ENCODE measurements at regions of chr2 and their contacts with region 1.

Region 1: DNA sequence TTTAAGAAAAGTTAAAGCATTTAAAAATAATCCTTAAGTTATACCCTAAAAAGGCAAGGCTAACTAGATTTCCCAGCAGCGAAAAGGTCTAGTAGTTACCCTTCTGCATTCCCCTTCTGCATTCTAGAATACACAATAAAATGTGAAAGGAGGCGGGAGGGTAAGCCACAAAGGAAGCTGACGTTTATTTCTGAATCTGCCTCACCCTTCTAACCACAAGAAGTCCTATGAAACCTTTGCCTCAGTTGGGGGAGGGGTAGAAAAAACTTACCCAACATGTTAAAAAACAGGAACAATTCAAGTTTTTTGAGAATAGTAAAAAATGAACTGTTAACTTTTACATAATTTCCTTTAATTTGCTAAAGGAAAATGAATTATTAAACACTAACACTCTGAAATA is 11.3 kb downstream of the STK17B start:
- DNase-seq: peak in 29 of 35 experiments; percentile 36 to 91 (median 65)
- ATAC-seq: peak; percentile 50 to 72 (median 68)
- H3K4me3 ChIP-seq: peak overlapping the region in 1 of 2 donors; percentile 22
- H3K4me3 Mint-ChIP-seq: peak overlapping the region; percentile 54 to 99 (median 67)
- H3K27ac ChIP-seq: peak overlapping the region; percentile 93
- H3K27ac Mint-ChIP-seq: peak overlapping the region; percentile 82
- H3K4me1 ChIP-seq: peaks cover 36 to 67% of the 10 kb centered on the region in 2 experiments
- H3K4me1 Mint-ChIP-seq: peaks cover 72 to 85% (median 82%) of the 10 kb centered on the region in 3 donors
- H3K27me3 ChIP-seq: no peaks in the 10 kb centered on the region
- H3K27me3 Mint-ChIP-seq: no peaks in the 10 kb centered on the region

Region 2: GRCh38 chr2:196131384-196131937 is 28.6 kb before region 1 on chr2:
- CTCF ChIA-PET with region 1: no interaction called
- POLR2A ChIA-PET with region 1: interaction called in 1 of 2 experiments, 10 read pairs
- DNase-seq: peak in 30 of 35 experiments; percentile 12 to 79 (median 44)
- ATAC-seq: peak; percentile 23 to 40 (median 34)
- H3K4me3 ChIP-seq: no peak overlapping the region
- H3K4me3 Mint-ChIP-seq: peak overlapping the region in 1 of 3 donors; percentile 43
- H3K27ac ChIP-seq: peak overlapping the region; percentile 33
- H3K27ac Mint-ChIP-seq: peak overlapping the region; percentile 62 to 83
- H3K4me1 ChIP-seq: peaks cover 0 to 10% of the 10 kb centered on the region in 2 experiments
- H3K4me1 Mint-ChIP-seq: peaks cover 14 to 21% (median 18%) of the 10 kb centered on the region in 3 donors
- H3K27me3 ChIP-seq: no peaks in the 10 kb centered on the region
- H3K27me3 Mint-ChIP-seq: no peaks in the 10 kb centered on the region

Region 3: DNA sequence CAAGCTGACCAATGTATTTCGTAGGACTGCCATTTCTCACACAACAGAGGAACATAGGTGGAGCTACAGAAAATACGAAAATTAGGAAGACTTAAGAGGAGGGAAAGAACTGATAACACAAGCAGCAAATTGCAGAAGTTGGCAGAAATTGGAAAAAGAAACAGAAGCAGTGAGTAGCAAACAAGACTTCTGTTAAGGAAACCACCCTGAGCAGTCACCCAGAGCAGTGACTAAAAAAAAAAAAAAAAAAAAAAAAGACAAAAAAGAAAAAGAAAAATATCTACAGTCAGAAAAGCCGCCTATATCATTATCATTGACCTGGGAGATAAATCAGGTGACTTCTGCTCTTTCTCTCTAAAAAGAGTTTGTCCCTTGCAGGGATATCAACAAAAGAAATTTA is 10.2 kb before region 1 on chr2:
- CTCF ChIA-PET with region 1: interaction called, 4 read pairs
- POLR2A ChIA-PET with region 1: interaction called, 10 to 29 read pairs
- DNase-seq: peak in 1 of 35 experiments; percentile 55
- ATAC-seq: peak in 1 of 4 experiments; percentile 16
- H3K4me3 ChIP-seq: no peak overlapping the region
- H3K4me3 Mint-ChIP-seq: peak overlapping the region; percentile 58 to 99 (median 67)
- H3K27ac ChIP-seq: peak overlapping the region; percentile 43
- H3K27ac Mint-ChIP-seq: peak overlapping the region; percentile 88 to 96
- H3K4me1 ChIP-seq: peaks cover 44 to 67% of the 10 kb centered on the region in 2 experiments
- H3K4me1 Mint-ChIP-seq: peaks cover 90 to 98% (median 94%) of the 10 kb centered on the region in 3 donors
- H3K27me3 ChIP-seq: no peaks in the 10 kb centered on the region
- H3K27me3 Mint-ChIP-seq: no peaks in the 10 kb centered on the region

Region 4: DNA sequence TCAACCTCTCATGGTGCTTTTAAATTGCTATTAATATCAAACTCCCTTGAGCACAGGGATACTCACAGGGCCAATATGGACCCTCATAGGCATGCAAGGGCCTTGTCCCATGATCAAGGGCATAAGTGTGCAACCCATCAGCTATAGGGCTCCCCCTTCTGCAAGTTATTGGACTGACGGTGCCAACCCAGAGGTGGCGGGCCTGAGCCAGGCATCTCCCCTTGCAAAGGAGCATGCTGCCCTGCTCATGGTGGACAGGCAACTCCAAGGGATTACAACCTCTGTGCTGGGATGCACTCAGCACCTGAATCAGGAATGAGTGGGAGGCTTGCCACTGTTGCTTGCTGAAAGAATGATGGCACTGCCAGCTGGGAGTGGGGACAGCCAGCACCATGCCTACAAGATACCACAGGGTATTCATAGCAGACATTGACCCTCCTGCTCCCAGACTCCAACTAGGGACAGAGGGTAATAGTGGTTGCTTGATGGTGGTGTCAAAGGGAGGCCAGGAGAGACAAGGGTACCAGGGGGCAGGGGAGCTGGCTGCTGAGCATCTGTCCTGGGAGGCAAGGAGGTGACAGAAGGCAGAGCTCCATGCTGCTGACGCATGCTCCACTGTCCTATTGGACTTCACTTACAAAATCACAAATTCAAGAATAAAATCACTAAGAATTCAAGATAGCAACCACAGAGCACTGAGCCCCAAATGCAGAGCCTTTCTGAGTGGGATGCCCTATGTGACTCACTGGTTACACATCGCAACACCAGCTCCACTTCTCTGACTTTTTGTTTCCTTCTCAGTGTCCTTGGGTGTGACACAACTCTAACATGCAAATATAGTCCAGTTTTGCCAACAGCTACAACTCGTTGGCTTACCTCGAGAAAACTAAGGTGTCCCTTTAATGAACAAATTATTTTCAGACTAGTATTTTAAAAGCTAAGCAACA is 322.3 kb after region 1 on chr2:
- CTCF ChIA-PET with region 1: no interaction called
- POLR2A ChIA-PET with region 1: interaction called in 1 of 2 experiments, 14 read pairs
- DNase-seq: no peak
- ATAC-seq: no peak
- H3K4me3 ChIP-seq: no peak overlapping the region
- H3K4me3 Mint-ChIP-seq: no peak overlapping the region
- H3K27ac ChIP-seq: no peak overlapping the region
- H3K27ac Mint-ChIP-seq: no peak overlapping the region
- H3K4me1 ChIP-seq: no peaks in the 10 kb centered on the region
- H3K4me1 Mint-ChIP-seq: no peaks in the 10 kb centered on the region
- H3K27me3 ChIP-seq: peaks cover 3 to 4% of the 10 kb centered on the region in 2 experiments
- H3K27me3 Mint-ChIP-seq: peaks cover 24 to 34% of the 10 kb centered on the region in 2 donors